PC-9 (cell line): ENCODE measurements at regions of chr2 and their contacts with region 1.

Region 1: GRCh38 chr2:47119001-47119400 is 36.1 kb downstream of the STPG4 start:
- DNase-seq: no peak
- H3K4me3 ChIP-seq: no peak overlapping the region
- H3K27ac ChIP-seq: no peak overlapping the region
- H3K4me1 ChIP-seq: peaks cover 10% of the 10 kb centered on the region; the same call in 1 of the 2 replicates
- H3K27me3 ChIP-seq: no peaks in the 10 kb centered on the region
- CTCF ChIP-seq: no peak

Region 2: GRCh38 chr2:46841621-46842020 is 277.4 kb before region 1 on chr2:
- CTCF ChIA-PET with region 1: no interaction called
- POLR2A ChIA-PET with region 1: no interaction called
- intact Hi-C with region 1: no loop called
- DNase-seq: no peak
- H3K4me3 ChIP-seq: no peak overlapping the region
- H3K27ac ChIP-seq: no peak overlapping the region
- H3K4me1 ChIP-seq: peaks cover 1% of the 10 kb centered on the region
- H3K27me3 ChIP-seq: no peaks in the 10 kb centered on the region
- CTCF ChIP-seq: no peak

Region 3: DNA sequence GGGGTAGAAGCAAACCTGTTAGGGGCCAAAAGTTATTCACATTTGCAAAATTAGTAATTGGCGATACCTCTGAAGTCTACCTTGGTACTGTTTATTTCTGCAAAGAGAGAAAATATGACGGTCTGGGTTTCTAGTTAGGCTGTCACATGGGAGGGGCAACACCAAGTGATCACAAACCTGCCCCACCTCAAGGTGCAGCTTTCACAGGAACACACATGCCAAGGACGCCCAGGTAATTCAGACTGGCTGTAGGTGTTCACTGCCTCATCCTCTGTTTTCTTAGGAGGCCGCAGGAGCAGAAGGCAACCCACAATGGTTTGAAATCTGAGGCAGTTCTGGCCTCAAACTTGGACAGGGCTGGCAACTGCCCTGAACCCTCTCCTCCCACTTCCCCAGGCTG is 20.0 kb before region 1 on chr2:
- CTCF ChIA-PET with region 1: no interaction called
- POLR2A ChIA-PET with region 1: interaction called, 10 read pairs
- intact Hi-C with region 1: no loop called
- DNase-seq: no peak
- H3K4me3 ChIP-seq: no peak overlapping the region
- H3K27ac ChIP-seq: no peak overlapping the region
- H3K4me1 ChIP-seq: no peaks in the 10 kb centered on the region
- H3K27me3 ChIP-seq: no peaks in the 10 kb centered on the region
- CTCF ChIP-seq: no peak